IMR-90 (cell line): ENCODE measurements at regions of chr2 and their contacts with region 1.

Region 1: GRCh38 chr2:200223205-200223784 is 83.2 kb upstream of the SPATS2L start:
- DNase-seq: peak; percentile 28
- ATAC-seq: peak; percentile 29
- H3K4me3 ChIP-seq: no peak overlapping the region
- H3K27ac ChIP-seq: no peak overlapping the region
- H3K4me1 ChIP-seq: peaks cover 4% of the 10 kb centered on the region
- H3K27me3 ChIP-seq: peaks cover 4% of the 10 kb centered on the region; the same call in 1 of the 2 replicates
- CTCF ChIP-seq: no peak
- POLR2A ChIP-seq: no peak
- RAD21 ChIP-seq: no peak

Region 2: GRCh38 chr2:200243029-200243840 is 19.9 kb after region 1 on chr2:
- CTCF ChIA-PET with region 1: interaction called, 4 read pairs
- POLR2A ChIA-PET with region 1: interaction called, 13 read pairs
- dilution Hi-C with region 1: no loop called
- in situ Hi-C with region 1: no loop called
- intact Hi-C with region 1: no loop called
- DNase-seq: no peak
- ATAC-seq: no peak
- H3K4me3 ChIP-seq: no peak overlapping the region
- H3K27ac ChIP-seq: no peak overlapping the region
- H3K4me1 ChIP-seq: peaks cover 4% of the 10 kb centered on the region
- H3K27me3 ChIP-seq: peaks cover 2% of the 10 kb centered on the region; the same call in 1 of the 2 replicates
- CTCF ChIP-seq: no peak
- POLR2A ChIP-seq: no peak
- RAD21 ChIP-seq: no peak